ENCODE measurements at regions of chr6 and their contacts with region 1.

Region 1: DNA sequence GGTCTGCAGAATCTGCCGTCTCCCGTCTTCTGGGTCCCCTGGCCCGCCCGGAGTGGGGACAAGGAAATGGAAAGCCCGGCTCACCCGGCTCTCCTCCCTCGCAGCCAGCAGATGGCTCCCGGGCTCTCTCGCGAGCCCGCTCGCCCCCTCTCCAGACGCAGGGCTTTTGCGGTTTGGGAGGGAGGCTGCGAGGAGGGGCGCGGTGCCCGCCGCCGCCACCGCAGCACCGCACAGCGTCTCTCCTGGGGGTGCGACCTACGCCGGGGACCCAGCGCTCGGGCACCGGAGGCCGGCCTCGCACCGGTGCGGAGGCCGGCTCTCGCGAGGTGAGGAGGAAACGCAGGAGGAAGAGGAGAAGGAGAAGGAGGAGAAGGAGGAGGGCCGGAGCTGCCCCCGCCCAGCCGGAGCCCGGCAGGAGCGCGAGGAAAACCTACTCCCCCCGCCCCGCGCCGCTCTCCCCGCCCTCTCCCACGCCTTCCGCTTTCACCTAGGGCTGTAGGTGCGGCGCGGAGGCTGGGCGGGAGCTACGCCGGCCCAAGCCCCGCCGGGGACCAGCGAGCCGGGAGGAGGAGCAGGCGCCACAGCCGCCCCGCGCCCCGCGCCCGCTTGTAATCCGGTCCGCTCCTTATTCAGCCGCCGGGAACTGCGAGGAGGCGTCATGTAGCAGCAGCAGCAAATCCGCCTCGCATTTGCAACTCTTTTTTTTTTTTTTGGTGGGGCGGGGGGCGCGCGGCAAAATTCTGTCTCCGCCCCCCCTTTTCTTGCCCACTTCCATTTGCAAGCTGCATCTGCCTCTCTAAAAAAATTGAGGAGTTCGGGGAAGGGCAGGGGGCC is at the start of gene CARMIL1:
- DNase-seq: peak; percentile 94
- H3K4me3 ChIP-seq: peak within 1 kb of the TSS; percentile 63 to 93 (median 92)
- H3K27ac ChIP-seq: peak within 1 kb of the TSS; percentile 86
- H3K4me1 ChIP-seq: peaks cover 25% of the 10 kb centered on the region
- H3K27me3 ChIP-seq: no peaks in the 10 kb centered on the region
- CTCF ChIP-seq: peak; percentile 25 to 84
- total RNA-seq, gene CARMIL1: 34.7 to 58.2 TPM

Region 2: GRCh38 chr6:25057111-25057905 is 221.8 kb before region 1 on chr6:
- CTCF ChIA-PET with region 1: interaction called, 17 read pairs
- dilution Hi-C with region 1: no loop called
- in situ Hi-C with region 1: no loop called
- intact Hi-C with region 1: no loop called
- DNase-seq: no peak
- H3K4me3 ChIP-seq: no peak overlapping the region
- H3K27ac ChIP-seq: no peak overlapping the region
- H3K4me1 ChIP-seq: no peaks in the 10 kb centered on the region
- H3K27me3 ChIP-seq: no peaks in the 10 kb centered on the region
- CTCF ChIP-seq: no peak

Region 3: GRCh38 chr6:25312703-25313501 is 33.8 kb after region 1 on chr6:
- CTCF ChIA-PET with region 1: no interaction called
- dilution Hi-C with region 1: no loop called
- in situ Hi-C with region 1: no loop called
- intact Hi-C with region 1: loop called (anchors 1 kb)
- DNase-seq: peak; percentile 77
- H3K4me3 ChIP-seq: peak overlapping the region in 2 of 3 experiments; percentile 9 to 44
- H3K27ac ChIP-seq: peak overlapping the region; percentile 80
- H3K4me1 ChIP-seq: peaks cover 33% of the 10 kb centered on the region
- H3K27me3 ChIP-seq: no peaks in the 10 kb centered on the region
- CTCF ChIP-seq: peak in 1 of 2 donors; percentile 25

Region 4: DNA sequence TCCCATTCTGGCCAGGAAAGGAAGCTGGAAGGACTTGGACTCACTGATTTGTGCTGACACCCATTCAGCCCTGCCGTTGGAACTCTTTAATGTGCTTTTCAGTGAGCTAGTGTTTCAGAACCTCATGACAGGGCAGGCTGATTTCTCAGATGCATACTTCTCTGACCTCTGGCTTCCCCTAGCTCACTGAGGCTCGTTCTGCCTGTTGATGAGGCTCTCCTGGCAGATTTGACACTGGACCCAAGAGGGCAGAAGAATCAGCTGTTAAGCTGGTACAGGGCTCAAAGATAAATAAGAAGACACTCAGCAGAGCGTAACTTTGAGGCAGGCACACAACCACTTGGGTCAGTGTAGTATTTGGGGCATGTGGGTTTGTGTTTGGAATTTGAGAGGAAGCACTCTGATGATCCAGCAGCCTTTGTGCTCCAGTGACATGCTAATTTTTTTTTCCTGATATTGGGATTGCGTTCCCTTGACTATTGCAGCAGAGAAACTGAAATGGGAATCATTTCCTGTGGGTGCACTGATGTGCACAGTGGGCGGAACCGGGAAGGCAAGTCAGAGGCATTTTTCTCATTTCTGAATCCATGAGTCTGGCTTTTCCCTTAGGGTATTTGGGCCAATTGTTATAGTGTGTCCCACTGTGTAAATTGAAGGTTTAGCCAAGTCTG is 80.2 kb after region 1 on chr6:
- CTCF ChIA-PET with region 1: no interaction called
- dilution Hi-C with region 1: no loop called
- in situ Hi-C with region 1: no loop called
- intact Hi-C with region 1: loop called (anchors 2 kb)
- DNase-seq: peak; percentile 58
- H3K4me3 ChIP-seq: peak overlapping the region in 1 of 3 experiments; percentile 2
- H3K27ac ChIP-seq: peak overlapping the region; percentile 81
- H3K4me1 ChIP-seq: peaks cover 52% of the 10 kb centered on the region
- H3K27me3 ChIP-seq: no peaks in the 10 kb centered on the region
- CTCF ChIP-seq: no peak

Region 5: DNA sequence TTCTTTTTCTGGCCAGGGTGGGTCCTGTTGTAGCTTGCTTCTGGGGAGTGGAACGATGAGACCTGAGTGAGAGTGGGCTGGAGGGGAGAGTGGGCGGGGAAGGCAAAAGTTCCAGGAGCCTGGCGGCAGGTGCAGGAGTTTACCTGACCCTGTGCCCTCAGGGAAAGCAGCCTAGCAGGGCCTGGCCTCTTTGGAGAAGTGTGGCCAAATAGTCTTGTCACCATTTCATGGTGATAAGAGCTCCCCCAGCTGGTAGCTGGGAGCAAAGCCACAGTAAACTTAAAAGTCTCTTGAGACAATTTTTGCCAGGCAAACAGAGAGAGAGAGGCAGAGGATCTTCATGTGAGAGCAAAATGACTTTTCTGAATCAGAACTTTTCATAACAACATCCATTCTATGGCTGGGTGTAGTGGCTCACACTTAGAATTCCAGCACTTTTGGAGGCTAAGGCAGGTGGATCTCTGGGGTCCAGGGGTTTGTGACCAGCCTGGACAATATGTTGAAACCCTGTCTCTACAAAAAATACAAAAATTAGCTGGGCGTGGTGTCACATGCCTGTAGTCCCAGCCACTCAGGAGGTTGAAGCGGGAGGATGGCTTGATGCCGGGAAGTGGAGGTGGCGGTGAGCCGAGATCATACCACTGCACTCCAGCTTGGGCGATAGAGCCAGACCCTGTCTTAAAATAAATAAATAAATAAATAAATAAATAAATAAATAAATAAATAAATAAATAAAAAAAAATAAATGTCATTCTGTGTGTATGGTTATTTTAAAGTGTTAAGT is 211.1 kb after region 1 on chr6:
- CTCF ChIA-PET with region 1: interaction called, 61 read pairs
- dilution Hi-C with region 1: no loop called
- in situ Hi-C with region 1: loop called (anchors 5 kb)
- intact Hi-C with region 1: loop called (anchors 1 kb)
- DNase-seq: peak; percentile 66
- H3K4me3 ChIP-seq: no peak overlapping the region
- H3K27ac ChIP-seq: no peak overlapping the region
- H3K4me1 ChIP-seq: no peaks in the 10 kb centered on the region
- H3K27me3 ChIP-seq: no peaks in the 10 kb centered on the region
- CTCF ChIP-seq: peak; percentile 87 to 91

Region 6: GRCh38 chr6:25556516-25556915 is 277.4 kb after region 1 on chr6:
- CTCF ChIA-PET with region 1: interaction called, 3 read pairs
- dilution Hi-C with region 1: no loop called
- in situ Hi-C with region 1: no loop called
- intact Hi-C with region 1: loop called (anchors 1 kb)
- DNase-seq: peak; percentile 35
- H3K4me3 ChIP-seq: no peak overlapping the region
- H3K27ac ChIP-seq: no peak overlapping the region
- H3K4me1 ChIP-seq: no peaks in the 10 kb centered on the region
- H3K27me3 ChIP-seq: no peaks in the 10 kb centered on the region
- CTCF ChIP-seq: peak; percentile 87

Region 7: GRCh38 chr6:25942561-25943147 is 663.5 kb after region 1 on chr6:
- CTCF ChIA-PET with region 1: no interaction called
- dilution Hi-C with region 1: no loop called
- in situ Hi-C with region 1: no loop called
- intact Hi-C with region 1: loop called (anchors 5 kb)
- DNase-seq: peak; percentile 35
- H3K4me3 ChIP-seq: no peak overlapping the region
- H3K27ac ChIP-seq: no peak overlapping the region
- H3K4me1 ChIP-seq: no peaks in the 10 kb centered on the region
- H3K27me3 ChIP-seq: no peaks in the 10 kb centered on the region
- CTCF ChIP-seq: peak; percentile 47 to 55